ENCODE measurements at regions of chrX and their contacts with region 1.

Region 1: DNA sequence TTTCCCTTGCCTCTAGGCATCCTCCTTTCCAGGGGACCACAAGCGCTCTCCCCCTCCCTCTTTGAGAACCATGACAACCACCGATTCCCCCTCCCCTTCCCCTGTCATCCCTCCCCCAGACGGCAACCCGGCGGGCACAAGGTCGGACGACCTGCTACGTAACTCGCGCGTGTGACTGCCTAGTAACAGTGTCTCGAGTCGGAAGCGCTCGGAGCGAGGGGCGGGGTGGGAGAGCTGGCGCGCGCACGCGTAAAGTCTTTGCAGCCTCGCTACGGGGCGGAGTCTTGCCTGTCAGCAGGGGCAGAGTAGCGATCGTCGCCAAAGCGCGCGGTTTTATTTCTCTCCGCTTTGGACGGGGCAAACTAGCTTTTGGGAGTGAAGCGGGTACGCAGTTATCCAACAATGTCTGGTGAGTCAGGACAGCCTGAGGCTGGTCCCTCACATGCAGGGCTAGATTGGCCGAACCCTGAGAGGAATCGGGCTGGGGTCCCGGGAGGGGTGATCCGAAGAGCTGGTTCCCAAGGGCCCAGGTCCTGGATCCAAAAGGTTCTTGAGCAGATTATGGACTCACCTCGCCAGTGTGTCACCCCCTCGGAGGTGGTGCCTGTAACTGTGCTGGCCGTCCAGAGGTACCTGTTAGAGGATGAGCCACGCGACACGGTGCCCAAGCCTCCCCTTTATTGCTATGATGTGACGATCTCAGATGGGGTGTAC is at the start of gene RADX:
- DNase-seq: peak; percentile 74
- H3K4me3 Mint-ChIP-seq: peak within 1 kb of the TSS; percentile 89
- H3K27ac Mint-ChIP-seq: peak within 1 kb of the TSS; percentile 85
- H3K4me1 Mint-ChIP-seq: peaks cover 6% of the 10 kb centered on the region
- H3K27me3 Mint-ChIP-seq: peaks cover 78% of the 10 kb centered on the region
- CTCF ChIP-seq: no peak
- total RNA-seq, gene RADX: 2.2 TPM in 2 replicates

Region 2: DNA sequence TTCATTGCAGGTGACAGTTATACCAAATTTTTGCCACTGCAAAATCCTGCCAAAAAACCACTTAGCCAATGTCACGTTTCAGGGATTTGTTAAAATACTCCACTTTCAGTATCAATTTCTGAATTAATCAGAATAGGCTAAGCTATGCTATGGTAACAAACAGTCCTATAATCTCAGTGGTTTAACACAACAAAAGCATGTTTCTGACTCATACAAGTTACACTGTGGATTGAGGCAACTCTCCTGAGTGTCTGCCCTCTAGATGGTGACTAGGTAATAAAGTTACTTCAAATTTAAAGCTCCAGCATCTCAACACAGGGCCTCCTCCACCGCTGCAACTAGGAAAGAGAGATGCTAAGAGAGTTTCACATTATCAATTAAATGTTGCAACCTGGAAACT is 23.0 kb before region 1 on chrX:
- CTCF ChIA-PET with region 1: interaction called, 4 read pairs
- POLR2A ChIA-PET with region 1: interaction called, 12 read pairs
- intact Hi-C with region 1: no loop called
- DNase-seq: no peak
- H3K4me3 Mint-ChIP-seq: no peak overlapping the region
- H3K27ac Mint-ChIP-seq: no peak overlapping the region
- H3K4me1 Mint-ChIP-seq: no peaks in the 10 kb centered on the region
- H3K27me3 Mint-ChIP-seq: peaks cover 34% of the 10 kb centered on the region
- CTCF ChIP-seq: no peak

Region 3: DNA sequence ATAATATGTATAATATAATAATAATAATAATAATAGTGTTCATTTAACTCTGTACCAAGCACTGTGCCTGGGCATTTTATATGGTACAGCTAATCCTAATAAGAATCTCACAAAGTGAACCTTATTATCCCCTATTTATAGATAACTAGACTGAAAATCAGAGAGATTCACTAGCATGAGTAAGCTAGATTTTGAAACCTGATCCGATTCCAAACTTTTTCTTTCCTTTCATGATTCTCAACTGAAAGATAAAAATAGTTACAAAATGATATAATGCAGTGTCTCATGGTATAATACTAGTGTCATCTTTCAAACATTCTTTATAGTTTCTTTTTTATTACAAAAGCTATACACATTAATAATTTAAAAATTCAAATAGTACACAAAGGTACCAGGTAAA is 58.8 kb after region 1 on chrX:
- CTCF ChIA-PET with region 1: no interaction called
- POLR2A ChIA-PET with region 1: interaction called, 4 read pairs
- intact Hi-C with region 1: loop called (anchors 10 kb)
- DNase-seq: no peak
- H3K4me3 Mint-ChIP-seq: no peak overlapping the region
- H3K27ac Mint-ChIP-seq: no peak overlapping the region
- H3K4me1 Mint-ChIP-seq: peaks cover 7% of the 10 kb centered on the region
- H3K27me3 Mint-ChIP-seq: peaks cover 46% of the 10 kb centered on the region
- CTCF ChIP-seq: no peak

Region 4: GRCh38 chrX:106802387-106803275 is 190.8 kb after region 1 on chrX and contains the start of gene TBC1D8B:
- CTCF ChIA-PET with region 1: no interaction called
- POLR2A ChIA-PET with region 1: interaction called, 3 read pairs
- intact Hi-C with region 1: loop called (anchors 5 kb)
- DNase-seq: peak; percentile 94
- H3K4me3 Mint-ChIP-seq: peak within 1 kb of the TSS; percentile 100
- H3K27ac Mint-ChIP-seq: peak within 1 kb of the TSS; percentile 91
- H3K4me1 Mint-ChIP-seq: no peaks in the 10 kb centered on the region
- H3K27me3 Mint-ChIP-seq: peaks cover 78% of the 10 kb centered on the region
- CTCF ChIP-seq: no peak
- total RNA-seq, gene TBC1D8B: 3.3 and 4.7 TPM in 2 replicates

Region 5: GRCh38 chrX:106906361-106906760 is 294.5 kb after region 1 on chrX:
- CTCF ChIA-PET with region 1: no interaction called
- POLR2A ChIA-PET with region 1: no interaction called
- intact Hi-C with region 1: no loop called
- DNase-seq: no peak
- H3K4me3 Mint-ChIP-seq: no peak overlapping the region
- H3K27ac Mint-ChIP-seq: no peak overlapping the region
- H3K4me1 Mint-ChIP-seq: no peaks in the 10 kb centered on the region
- H3K27me3 Mint-ChIP-seq: peaks cover 64% of the 10 kb centered on the region
- CTCF ChIP-seq: no peak